A549 (cell line): ENCODE measurements at regions of chr10 and their contacts with region 1.

Region 1: GRCh38 chr10:112131346-112131745 is 52.2 kb downstream of the GPAM start:
- DNase-seq: no peak
- ATAC-seq: no peak
- H3K4me3 ChIP-seq: no peak overlapping the region
- H3K27ac ChIP-seq: no peak overlapping the region
- H3K4me1 ChIP-seq: no peaks in the 10 kb centered on the region
- CTCF ChIP-seq: no peak
- EP300 ChIP-seq: no peak
- POLR2A ChIP-seq: no peak
- RAD21 ChIP-seq: no peak

Region 2: GRCh38 chr10:112115799-112116385 is 15.5 kb before region 1 on chr10:
- CTCF ChIA-PET with region 1: interaction called, 42 read pairs
- POLR2A ChIA-PET with region 1: no interaction called
- DNase-seq: peak; percentile 33 to 46
- ATAC-seq: peak; percentile 78 to 87
- H3K4me3 ChIP-seq: no peak overlapping the region
- H3K27ac ChIP-seq: no peak overlapping the region
- H3K4me1 ChIP-seq: no peaks in the 10 kb centered on the region
- CTCF ChIP-seq: peak; percentile 54
- EP300 ChIP-seq: no peak
- POLR2A ChIP-seq: no peak
- RAD21 ChIP-seq: peak; percentile 14 to 40; a peak in 2 of 5 replicates

Region 3: DNA sequence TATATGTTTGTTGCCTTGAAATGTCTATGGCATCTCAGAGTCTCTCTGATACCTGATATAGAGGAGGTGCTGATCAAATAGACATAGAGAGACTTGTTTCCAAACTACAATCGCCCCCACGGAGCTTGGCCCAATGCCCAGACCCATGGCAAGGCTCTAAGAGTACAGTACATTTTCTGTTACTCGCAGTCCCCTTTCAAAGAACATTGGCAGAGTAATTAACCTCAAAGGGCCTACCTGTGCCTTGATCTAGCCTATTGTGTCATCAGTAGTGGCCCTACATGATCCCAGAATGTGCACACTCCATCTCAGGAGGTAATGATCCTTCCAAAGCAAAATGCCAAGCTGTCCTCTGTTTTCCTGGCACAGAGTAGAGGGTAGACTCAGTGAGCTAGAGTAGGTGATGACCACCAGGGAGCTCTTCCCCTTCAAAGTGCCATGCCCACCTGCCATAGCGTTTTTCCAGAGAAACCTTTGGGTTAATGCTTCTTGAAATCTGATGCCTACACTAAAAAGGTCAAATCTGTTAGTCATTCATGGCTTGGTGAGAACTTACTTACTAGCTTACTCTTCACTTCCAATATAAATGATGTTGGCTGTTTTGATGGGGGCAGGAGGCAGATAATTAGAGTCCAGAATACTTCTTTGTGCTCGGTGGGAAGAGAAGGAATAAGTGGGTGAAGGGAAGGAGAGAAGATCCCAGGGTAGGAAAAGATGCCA is 201.3 kb after region 1 on chr10:
- CTCF ChIA-PET with region 1: no interaction called
- POLR2A ChIA-PET with region 1: no interaction called
- DNase-seq: no peak
- ATAC-seq: no peak
- H3K4me3 ChIP-seq: no peak overlapping the region
- H3K27ac ChIP-seq: no peak overlapping the region; a peak in 1 of 6 replicates
- H3K4me1 ChIP-seq: no peaks in the 10 kb centered on the region
- CTCF ChIP-seq: no peak
- EP300 ChIP-seq: no peak
- POLR2A ChIP-seq: no peak
- RAD21 ChIP-seq: no peak

Region 4: GRCh38 chr10:112580267-112580666 is 448.9 kb after region 1 on chr10:
- CTCF ChIA-PET with region 1: no interaction called
- POLR2A ChIA-PET with region 1: no interaction called
- DNase-seq: no peak
- ATAC-seq: no peak
- H3K4me3 ChIP-seq: no peak overlapping the region
- H3K27ac ChIP-seq: no peak overlapping the region
- H3K4me1 ChIP-seq: peaks cover 12% of the 10 kb centered on the region
- CTCF ChIP-seq: no peak
- EP300 ChIP-seq: no peak
- POLR2A ChIP-seq: no peak
- RAD21 ChIP-seq: no peak